Mammary epithelial cell (primary cell): ENCODE measurements at regions of chr5 and their contacts with region 1.

Region 1: GRCh38 chr5:148963664-148964063 is 99.2 kb downstream of the SH3TC2 start:
- DNase-seq: no peak
- H3K4me3 ChIP-seq: no peak overlapping the region
- H3K27ac ChIP-seq: no peak overlapping the region
- H3K4me1 ChIP-seq: peaks cover 28% of the 10 kb centered on the region
- H3K27me3 ChIP-seq: no peaks in the 10 kb centered on the region
- CTCF ChIP-seq: no peak

Region 2: DNA sequence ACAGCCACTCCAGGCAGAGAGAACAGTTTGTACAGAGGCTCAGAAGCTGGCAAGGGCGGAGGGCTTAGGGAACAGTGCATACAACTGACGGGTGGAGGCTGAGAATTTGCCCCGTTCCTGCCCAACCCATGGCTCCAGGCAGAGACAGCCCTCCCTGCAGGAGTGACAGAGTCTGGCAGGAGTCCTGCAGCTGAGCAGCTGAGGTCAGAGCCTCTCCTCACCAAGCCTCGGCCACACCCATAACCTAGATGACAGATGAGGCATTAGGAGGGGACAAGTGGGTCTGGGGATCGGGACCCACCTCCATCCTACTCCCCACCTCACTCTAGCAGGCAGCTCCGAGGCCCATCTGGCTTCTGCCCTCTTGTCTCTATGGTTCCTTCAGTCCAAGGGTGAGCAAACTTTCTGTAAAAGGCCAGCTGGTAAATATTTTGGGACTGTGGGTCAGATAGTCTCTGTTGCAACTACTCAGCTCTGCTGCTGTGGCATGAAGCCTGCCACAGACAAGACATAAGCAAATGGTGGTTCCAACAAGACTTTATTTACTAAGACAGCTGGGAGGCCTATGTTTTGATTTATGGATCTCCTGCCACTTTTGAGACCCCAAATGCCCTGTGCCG is 15.6 kb after region 1 on chr5:
- CTCF ChIA-PET with region 1: no interaction called
- dilution Hi-C with region 1: no loop called
- in situ Hi-C with region 1: no loop called
- intact Hi-C with region 1: loop called (anchors 1 kb)
- DNase-seq: peak; percentile 74
- H3K4me3 ChIP-seq: no peak overlapping the region
- H3K27ac ChIP-seq: peak overlapping the region; percentile 89
- H3K4me1 ChIP-seq: peaks cover 52% of the 10 kb centered on the region
- H3K27me3 ChIP-seq: no peaks in the 10 kb centered on the region
- CTCF ChIP-seq: no peak

Region 3: DNA sequence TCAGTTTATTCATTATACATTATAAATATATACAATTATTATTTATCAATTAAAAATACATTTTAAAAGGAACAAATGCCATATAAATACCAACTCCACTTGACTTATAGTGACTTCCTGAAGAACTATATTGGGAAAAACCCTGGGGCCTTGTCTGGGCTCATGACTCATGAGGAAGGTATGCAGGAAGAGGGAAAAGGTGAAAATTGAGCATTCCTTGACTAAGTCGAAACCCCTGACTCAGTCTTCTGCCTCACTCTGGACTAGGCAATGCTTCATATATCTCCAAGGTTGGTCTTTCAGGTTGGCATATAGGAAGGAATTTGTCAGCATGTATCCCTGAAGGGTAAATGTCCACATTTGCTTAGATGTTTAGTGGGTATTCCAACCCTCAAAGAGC is 20.7 kb after region 1 on chr5:
- CTCF ChIA-PET with region 1: interaction called, 4 read pairs
- dilution Hi-C with region 1: no loop called
- in situ Hi-C with region 1: no loop called
- intact Hi-C with region 1: loop called (anchors 1 kb)
- DNase-seq: peak; percentile 94
- H3K4me3 ChIP-seq: no peak overlapping the region
- H3K27ac ChIP-seq: peak overlapping the region; percentile 100
- H3K4me1 ChIP-seq: peaks cover 51% of the 10 kb centered on the region
- H3K27me3 ChIP-seq: no peaks in the 10 kb centered on the region
- CTCF ChIP-seq: no peak